Left ventricle myocardium superior (tissue), 1 donor: ENCODE measurements at regions of chr12 and their contacts with region 1.

Region 1: GRCh38 chr12:49515266-49515665 is 23.6 kb upstream of the KCNH3 start:
- DNase-seq: no peak
- ATAC-seq: no peak

Region 2: GRCh38 chr12:49358483-49359141 is 156.7 kb before region 1 on chr12:
- intact Hi-C with region 1: loop called (anchors 1 kb)
- DNase-seq: no peak
- ATAC-seq: peak; percentile 83